Activated naive CD4-positive, alpha-beta T cell treated with anti-CD3 and anti-CD28 coated beads, Interleukin-2, amount 10 ng/mL, durations not matched to agents 7 days and 5 days (primary cell): ENCODE measurements at regions of chr11 and their contacts with region 1.

Region 1: GRCh38 chr11:12888525-12889158 is 120.5 kb upstream of the RASSF10 start:
- DNase-seq: peak; percentile 79
- H3K4me3 Mint-ChIP-seq: no peak overlapping the region
- H3K27ac Mint-ChIP-seq: no peak overlapping the region
- H3K4me1 Mint-ChIP-seq: no peaks in the 10 kb centered on the region
- H3K27me3 Mint-ChIP-seq: peaks cover 15% of the 10 kb centered on the region

Region 2: GRCh38 chr11:12288212-12288930 is 600.3 kb before region 1 on chr11:
- CTCF ChIA-PET with region 1: interaction called, 27 read pairs
- DNase-seq: peak; percentile 71
- H3K4me3 Mint-ChIP-seq: no peak overlapping the region
- H3K27ac Mint-ChIP-seq: no peak overlapping the region
- H3K4me1 Mint-ChIP-seq: peaks cover 19% of the 10 kb centered on the region
- H3K27me3 Mint-ChIP-seq: peaks cover 7% of the 10 kb centered on the region

Region 3: DNA sequence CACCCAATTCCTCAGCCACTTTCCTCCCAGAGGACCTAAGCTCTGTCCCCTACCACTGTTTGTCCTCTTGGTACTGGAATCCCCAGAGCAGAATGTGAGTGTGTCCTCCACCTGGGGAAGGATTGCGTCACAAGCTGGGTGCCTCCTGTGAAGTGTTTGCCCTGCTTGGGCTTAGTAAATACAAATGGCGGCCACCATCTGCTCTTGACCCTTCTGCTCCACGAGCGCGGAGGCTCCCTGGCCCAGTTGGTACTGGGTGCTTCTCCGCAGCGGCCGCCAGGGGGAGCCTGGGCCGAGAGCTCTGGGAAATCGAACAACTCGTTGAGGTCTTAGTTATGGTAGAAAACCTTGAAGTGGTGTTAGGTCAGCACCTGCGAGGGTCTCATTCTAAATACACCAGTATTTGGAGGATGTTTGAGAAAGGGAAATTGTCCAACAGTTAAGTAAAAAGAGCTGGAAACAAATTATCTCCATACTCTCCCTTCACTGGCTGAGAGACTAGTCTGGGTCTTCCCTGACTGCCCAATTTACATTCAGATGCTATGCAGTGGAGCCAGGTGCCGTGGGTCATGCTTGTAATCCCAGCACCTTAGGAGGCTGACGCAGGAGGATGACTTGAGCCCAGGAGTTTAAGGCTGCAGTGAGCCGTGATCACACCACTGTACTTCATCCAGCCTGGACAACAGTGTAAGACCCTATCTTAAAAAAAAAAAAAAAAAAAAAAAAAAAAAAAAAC is 289.1 kb before region 1 on chr11:
- CTCF ChIA-PET with region 1: interaction called, 72 read pairs
- DNase-seq: peak; percentile 52
- H3K4me3 Mint-ChIP-seq: no peak overlapping the region
- H3K27ac Mint-ChIP-seq: no peak overlapping the region
- H3K4me1 Mint-ChIP-seq: peaks cover 15% of the 10 kb centered on the region
- H3K27me3 Mint-ChIP-seq: peaks cover 15% of the 10 kb centered on the region

Region 4: DNA sequence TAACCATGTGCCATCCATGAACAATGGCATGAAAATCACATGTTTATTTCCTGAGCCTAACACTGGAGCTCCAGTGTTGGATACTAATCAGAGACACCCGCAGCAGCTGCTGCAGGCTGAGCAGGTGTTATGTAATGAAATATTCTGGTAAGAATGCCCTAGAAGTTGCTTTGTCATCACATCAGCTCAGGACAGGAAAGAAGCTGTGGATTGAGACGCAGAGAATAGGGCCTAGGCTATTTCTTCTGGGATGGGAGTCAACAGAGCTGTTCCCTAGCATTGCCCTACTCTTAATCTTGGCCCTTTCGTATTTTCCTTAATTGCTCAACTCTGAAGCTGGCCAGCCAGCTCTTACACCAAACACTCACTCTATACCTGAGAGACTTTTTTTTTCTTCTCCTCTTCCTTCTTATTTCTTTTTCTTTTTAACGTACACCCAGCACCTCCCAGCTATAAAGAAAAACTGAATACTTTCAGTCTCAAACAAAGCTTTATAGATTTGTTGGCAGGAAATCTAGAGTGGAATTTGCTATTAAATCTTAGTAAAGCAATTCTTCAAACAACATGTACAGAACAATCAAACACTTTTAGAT is 152.4 kb after region 1 on chr11:
- CTCF ChIA-PET with region 1: no interaction called
- DNase-seq: no peak
- H3K4me3 Mint-ChIP-seq: no peak overlapping the region
- H3K27ac Mint-ChIP-seq: no peak overlapping the region
- H3K4me1 Mint-ChIP-seq: no peaks in the 10 kb centered on the region
- H3K27me3 Mint-ChIP-seq: peaks cover 8% of the 10 kb centered on the region

Region 5: GRCh38 chr11:13052130-13052605 is 163.5 kb after region 1 on chr11:
- CTCF ChIA-PET with region 1: no interaction called
- DNase-seq: no peak
- H3K4me3 Mint-ChIP-seq: no peak overlapping the region
- H3K27ac Mint-ChIP-seq: no peak overlapping the region
- H3K4me1 Mint-ChIP-seq: peaks cover 5% of the 10 kb centered on the region
- H3K27me3 Mint-ChIP-seq: peaks cover 8% of the 10 kb centered on the region